ENCODE measurements at regions of chr9 and their contacts with region 1.

Region 1: DNA sequence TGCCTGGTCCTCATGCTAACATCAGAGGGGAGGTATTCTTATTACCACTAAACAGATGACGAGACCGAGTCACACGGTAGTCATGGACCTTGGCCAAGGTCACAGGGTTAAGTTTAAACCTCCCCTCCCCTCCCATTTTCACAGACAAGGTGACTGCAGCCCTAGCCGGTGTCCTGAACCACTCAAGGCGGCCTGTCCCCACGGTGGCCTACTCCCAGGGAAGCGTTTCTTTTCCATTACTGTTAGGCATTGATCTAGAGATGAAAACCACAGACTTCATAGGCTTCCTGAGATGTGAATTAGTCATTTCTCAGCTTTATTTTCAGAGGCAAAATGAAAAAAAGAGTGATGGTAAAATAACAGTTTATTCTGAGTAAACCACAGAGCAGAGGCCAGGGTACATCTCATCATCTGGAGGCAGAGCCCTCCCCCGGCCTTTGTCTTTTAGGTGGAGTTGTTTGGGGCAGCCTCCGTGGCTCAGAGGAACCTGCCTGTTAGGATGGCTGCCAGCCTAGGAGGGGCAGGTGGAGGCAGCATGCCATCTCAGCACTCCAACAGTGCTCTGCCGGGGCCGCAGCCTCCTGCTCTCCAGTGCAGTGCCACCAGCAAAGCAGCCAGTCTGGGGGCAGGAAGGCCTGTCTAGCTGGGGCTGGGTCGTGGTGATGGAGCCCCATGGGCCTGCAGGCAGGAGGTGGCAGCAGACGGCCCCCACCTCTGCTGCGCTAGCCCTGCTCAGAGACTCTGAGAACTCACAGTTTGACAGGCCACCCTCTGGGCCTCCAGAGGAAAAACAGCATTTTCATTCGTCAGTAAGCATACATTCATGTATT is 71.2 kb downstream of the RAPGEF1 start:
- DNase-seq: peak; percentile 70
- ATAC-seq: peak; percentile 79
- H3K4me3 Mint-ChIP-seq: peak overlapping the region; percentile 67
- H3K27ac Mint-ChIP-seq: peak overlapping the region; percentile 97
- H3K4me1 Mint-ChIP-seq: peaks cover 75% of the 10 kb centered on the region
- H3K27me3 Mint-ChIP-seq: no peaks in the 10 kb centered on the region

Region 2: GRCh38 chr9:131709771-131710454 is 41.3 kb after region 1 on chr9:
- CTCF ChIA-PET with region 1: interaction called, 10 read pairs
- POLR2A ChIA-PET with region 1: interaction called, 5 read pairs
- DNase-seq: no peak
- ATAC-seq: peak; percentile 80
- H3K4me3 Mint-ChIP-seq: peak overlapping the region; percentile 26
- H3K27ac Mint-ChIP-seq: peak overlapping the region; percentile 63
- H3K4me1 Mint-ChIP-seq: peaks cover 70% of the 10 kb centered on the region
- H3K27me3 Mint-ChIP-seq: no peaks in the 10 kb centered on the region

Measured in activated CD8-positive, alpha-beta T cell treated with anti-CD3 and anti-CD28 coated beads, Interleukin-2, amount 10 ng/mL, durations not matched to agents 7 days and 5 days (primary cell).